Activated B cell treated with CpG ODN at 0.5 μM for 24 hours (primary cell): ENCODE measurements at regions of chr1 and their contacts with region 1.

Region 1: DNA sequence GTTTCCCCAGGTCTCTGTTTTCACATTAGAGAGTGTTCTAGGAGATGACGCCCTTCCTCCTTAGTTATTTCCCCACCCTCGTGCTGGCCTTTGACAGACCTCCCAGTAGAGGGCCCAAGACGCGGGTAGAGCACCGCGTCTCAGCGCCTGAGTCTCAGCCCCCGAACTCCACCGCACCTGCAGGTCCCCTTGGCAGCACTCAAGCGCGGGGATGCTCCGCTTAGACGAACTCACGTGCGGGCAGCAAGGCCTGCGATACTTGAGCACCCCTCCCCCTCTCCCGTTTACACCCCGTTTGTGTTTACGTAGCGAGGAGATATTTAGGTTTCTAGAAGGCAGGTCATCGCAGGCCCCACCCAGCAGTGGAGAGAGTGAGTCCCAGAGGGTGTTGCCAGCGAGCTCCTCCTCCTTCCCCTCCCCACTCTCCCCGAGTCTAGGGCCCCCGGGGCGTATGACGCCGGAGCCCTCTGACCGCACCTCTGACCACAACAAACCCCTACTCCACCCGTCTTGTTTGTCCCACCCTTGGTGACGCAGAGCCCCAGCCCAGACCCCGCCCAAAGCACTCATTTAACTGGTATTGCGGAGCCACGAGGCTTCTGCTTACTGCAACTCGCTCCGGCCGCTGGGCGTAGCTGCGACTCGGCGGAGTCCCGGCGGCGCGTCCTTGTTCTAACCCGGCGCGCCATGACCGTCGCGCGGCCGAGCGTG is at the start of gene CD55:
- DNase-seq: peak; percentile 94
- ATAC-seq: peak; percentile 87
- H3K4me3 Mint-ChIP-seq: peak within 1 kb of the TSS; percentile 94
- H3K27ac Mint-ChIP-seq: peak within 1 kb of the TSS; percentile 100
- H3K4me1 Mint-ChIP-seq: peaks cover 65% of the 10 kb centered on the region
- H3K27me3 Mint-ChIP-seq: no peaks in the 10 kb centered on the region
- CTCF ChIP-seq: no peak
- total RNA-seq, gene CD55: 90.9 and 91.1 TPM in 2 replicates

Region 2: DNA sequence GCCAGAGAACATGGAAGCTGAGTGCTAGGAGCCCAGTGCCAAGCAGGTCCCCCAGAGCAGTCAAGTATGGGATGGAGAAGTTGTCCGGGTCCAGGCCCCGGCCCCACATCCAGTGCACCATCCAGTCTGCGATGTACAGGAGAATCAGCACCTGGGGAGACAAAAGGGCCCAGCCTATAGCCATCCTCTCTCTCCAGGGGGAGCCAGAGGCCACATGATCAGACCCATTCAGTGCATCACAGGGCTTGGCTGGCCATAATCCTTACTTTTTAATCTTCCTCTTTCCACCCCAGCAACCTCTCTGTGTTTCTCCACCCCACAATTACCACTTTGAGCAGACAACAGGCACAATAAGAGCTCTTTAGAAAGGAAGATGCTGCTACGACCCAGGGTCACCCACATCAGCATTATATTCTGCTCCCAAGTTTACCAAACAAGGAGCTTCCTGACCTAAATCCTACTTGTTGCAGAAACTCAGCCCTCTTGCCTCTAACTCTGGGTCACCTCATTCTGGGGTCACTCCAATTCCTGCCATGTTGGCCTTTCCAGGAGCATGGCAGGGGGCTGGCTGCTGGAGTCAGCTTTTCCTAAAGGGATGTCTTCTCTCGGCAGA is 1529.6 kb before region 1 on chr1:
- CTCF ChIA-PET with region 1: no interaction called
- POLR2A ChIA-PET with region 1: no interaction called
- intact Hi-C with region 1: no loop called
- DNase-seq: peak; percentile 46
- ATAC-seq: peak; percentile 65
- H3K4me3 Mint-ChIP-seq: no peak overlapping the region
- H3K27ac Mint-ChIP-seq: peak overlapping the region; percentile 63
- H3K4me1 Mint-ChIP-seq: peaks cover 37% of the 10 kb centered on the region
- H3K27me3 Mint-ChIP-seq: no peaks in the 10 kb centered on the region
- CTCF ChIP-seq: no peak

Region 3: DNA sequence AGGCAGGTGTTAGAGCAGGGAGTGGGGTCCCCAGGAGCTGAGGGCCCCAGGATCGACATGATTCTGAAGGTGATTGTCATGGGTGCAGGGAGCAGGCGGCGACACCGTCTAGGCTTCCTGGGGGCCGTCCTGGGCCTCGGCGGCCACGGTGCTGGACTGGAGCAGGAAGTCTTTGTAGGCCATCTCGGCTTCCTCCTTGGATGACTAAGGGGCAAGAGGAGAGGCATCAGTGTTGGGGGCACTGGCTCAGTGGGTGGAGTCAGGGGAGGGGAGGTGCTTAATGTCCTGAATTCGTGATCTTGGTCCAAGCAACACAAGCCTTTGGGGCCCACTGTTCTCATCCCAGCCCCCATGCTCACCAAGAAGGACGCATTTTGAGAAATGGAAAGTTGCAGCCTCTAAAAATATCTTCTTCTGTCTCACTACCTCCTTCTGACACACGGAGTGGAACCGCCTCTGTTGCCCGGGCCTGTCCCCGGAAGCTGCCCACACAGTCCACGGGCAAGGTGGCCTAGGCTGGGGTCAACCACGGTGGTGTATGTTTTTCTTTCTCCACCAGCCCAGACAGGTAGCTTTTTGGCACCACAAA is 390.9 kb before region 1 on chr1:
- CTCF ChIA-PET with region 1: no interaction called
- POLR2A ChIA-PET with region 1: interaction called, 4 read pairs
- intact Hi-C with region 1: loop called (anchors 1 kb)
- DNase-seq: peak; percentile 72
- ATAC-seq: peak; percentile 83
- H3K4me3 Mint-ChIP-seq: peak overlapping the region; percentile 79
- H3K27ac Mint-ChIP-seq: peak overlapping the region; percentile 99
- H3K4me1 Mint-ChIP-seq: peaks cover 67% of the 10 kb centered on the region
- H3K27me3 Mint-ChIP-seq: no peaks in the 10 kb centered on the region
- CTCF ChIP-seq: no peak

Region 4: DNA sequence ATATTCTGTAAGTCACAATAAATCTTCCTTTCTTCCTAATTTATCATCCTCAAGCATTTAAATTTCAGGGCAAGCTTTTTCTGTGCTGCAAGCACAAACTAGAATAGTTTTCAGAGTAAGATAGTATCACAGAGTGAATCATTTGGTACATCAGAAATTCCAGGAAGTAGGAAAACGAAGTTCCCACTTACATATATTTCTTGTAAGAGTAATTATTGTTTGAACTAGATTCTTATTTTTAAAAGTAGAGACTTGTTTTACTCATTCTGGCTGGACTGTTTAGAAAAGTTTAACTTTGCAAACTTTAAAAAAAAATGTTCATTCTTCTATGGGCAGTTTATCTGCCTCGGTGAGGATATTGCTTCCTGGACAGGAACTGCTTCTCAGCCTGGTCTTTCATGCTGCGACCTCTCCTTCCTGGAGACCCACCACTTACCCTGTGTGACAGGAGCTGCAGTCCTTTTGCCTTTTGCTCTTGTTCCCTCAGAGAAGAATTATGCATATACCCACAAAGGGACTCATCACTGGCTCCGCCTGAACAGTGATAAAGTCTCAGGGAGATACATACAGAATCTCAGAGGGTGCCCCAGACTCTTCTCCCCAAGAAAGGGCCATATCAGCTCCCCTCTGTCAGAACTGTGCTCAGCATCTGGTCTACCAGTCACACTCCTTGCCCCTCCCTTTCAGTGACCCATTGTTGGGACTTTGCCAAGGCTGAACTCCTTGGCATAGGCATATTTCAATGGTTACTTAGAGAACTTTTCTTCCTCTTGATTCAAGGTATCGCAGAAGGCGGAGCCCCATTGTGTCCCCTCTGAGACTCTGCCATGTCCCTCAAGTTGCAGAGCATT is 102.5 kb before region 1 on chr1:
- CTCF ChIA-PET with region 1: no interaction called
- POLR2A ChIA-PET with region 1: interaction called, 3 read pairs
- intact Hi-C with region 1: loop called (anchors 5 kb)
- DNase-seq: no peak
- ATAC-seq: no peak
- H3K4me3 Mint-ChIP-seq: peak overlapping the region; percentile 26
- H3K27ac Mint-ChIP-seq: peak overlapping the region; percentile 30
- H3K4me1 Mint-ChIP-seq: peaks cover 25% of the 10 kb centered on the region
- H3K27me3 Mint-ChIP-seq: no peaks in the 10 kb centered on the region
- CTCF ChIP-seq: no peak

Region 5: GRCh38 chr1:207248544-207249198 is 72.6 kb before region 1 on chr1:
- CTCF ChIA-PET with region 1: no interaction called
- POLR2A ChIA-PET with region 1: no interaction called
- intact Hi-C with region 1: no loop called
- DNase-seq: no peak
- ATAC-seq: no peak
- H3K4me3 Mint-ChIP-seq: no peak overlapping the region
- H3K27ac Mint-ChIP-seq: no peak overlapping the region
- H3K4me1 Mint-ChIP-seq: peaks cover 5% of the 10 kb centered on the region
- H3K27me3 Mint-ChIP-seq: no peaks in the 10 kb centered on the region
- CTCF ChIP-seq: no peak

Region 6: DNA sequence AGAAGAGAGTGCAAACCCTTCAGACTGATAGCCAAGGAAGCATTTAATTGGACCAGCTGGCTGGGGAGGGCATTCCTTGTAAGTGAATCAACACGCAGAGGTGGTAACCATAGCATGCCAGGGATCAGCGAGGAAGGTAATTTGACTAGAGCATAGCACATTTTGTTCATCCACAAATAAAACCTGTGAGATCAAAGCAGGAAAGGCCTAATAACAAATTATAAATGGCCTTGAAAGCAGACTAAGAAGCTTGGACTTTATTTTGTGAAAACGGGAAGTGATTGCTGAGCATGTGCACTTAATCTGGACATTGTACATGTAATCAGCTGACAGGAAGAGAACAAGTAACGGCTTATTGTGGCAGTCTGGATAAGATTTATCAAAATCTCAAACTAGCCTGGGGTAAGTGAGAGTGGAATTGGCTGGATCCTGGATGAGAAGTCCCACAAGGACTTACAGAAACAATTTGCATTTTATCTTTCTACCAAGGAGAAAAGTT is 11.4 kb before region 1 on chr1:
- CTCF ChIA-PET with region 1: interaction called, 4 read pairs
- POLR2A ChIA-PET with region 1: interaction called, 59 read pairs
- intact Hi-C with region 1: loop called (anchors 1 kb)
- DNase-seq: no peak
- ATAC-seq: peak; percentile 67
- H3K4me3 Mint-ChIP-seq: peak overlapping the region; percentile 77
- H3K27ac Mint-ChIP-seq: peak overlapping the region; percentile 91
- H3K4me1 Mint-ChIP-seq: peaks cover 27% of the 10 kb centered on the region
- H3K27me3 Mint-ChIP-seq: no peaks in the 10 kb centered on the region
- CTCF ChIP-seq: no peak

Region 7: DNA sequence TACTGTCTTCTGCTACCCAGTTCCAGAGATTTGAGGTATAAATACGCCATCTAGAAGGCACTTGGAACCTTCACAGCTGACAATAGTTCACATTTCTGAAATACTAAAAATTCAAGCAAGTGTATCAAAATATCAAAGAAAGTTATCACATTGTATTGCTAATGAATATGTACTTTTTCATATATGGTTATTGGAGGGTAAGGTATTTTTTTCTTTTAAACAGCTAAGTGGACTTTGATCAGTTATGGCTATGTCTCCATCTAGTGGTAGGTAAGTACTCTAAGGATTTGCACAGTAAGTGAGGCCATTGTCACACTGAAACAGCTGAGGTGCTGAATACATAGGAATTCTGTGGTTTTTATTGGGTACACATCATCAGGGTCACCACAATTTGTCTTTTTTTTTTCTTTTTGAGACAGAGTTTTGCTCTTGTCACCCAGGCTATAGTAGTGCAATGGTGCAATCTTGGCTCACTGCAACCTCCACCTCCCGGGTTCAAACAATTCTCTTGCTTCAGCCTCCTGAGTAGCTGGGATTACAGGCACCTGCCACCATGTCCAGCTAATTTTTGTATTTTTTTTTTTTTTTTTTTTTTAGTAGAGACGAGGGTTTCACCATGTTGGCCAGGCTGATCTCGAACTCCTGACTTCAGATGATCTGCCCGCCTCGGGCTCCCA is 83.8 kb after region 1 on chr1:
- CTCF ChIA-PET with region 1: interaction called, 13 read pairs
- POLR2A ChIA-PET with region 1: interaction called, 26 read pairs
- intact Hi-C with region 1: loop called (anchors 1 kb)
- DNase-seq: no peak
- ATAC-seq: peak; percentile 80
- H3K4me3 Mint-ChIP-seq: no peak overlapping the region
- H3K27ac Mint-ChIP-seq: no peak overlapping the region
- H3K4me1 Mint-ChIP-seq: peaks cover 31% of the 10 kb centered on the region
- H3K27me3 Mint-ChIP-seq: no peaks in the 10 kb centered on the region
- CTCF ChIP-seq: peak; percentile 46

Region 8: GRCh38 chr1:207499573-207499972 is 178.3 kb after region 1 on chr1:
- CTCF ChIA-PET with region 1: interaction called, 4 read pairs
- POLR2A ChIA-PET with region 1: interaction called, 23 read pairs
- intact Hi-C with region 1: loop called (anchors 1 kb)
- DNase-seq: peak; percentile 42
- ATAC-seq: peak; percentile 61
- H3K4me3 Mint-ChIP-seq: no peak overlapping the region
- H3K27ac Mint-ChIP-seq: peak overlapping the region; percentile 64
- H3K4me1 Mint-ChIP-seq: peaks cover 38% of the 10 kb centered on the region
- H3K27me3 Mint-ChIP-seq: no peaks in the 10 kb centered on the region
- CTCF ChIP-seq: peak; percentile 60